ENCODE measurements at regions of chr20 and their contacts with region 1.

Region 1: DNA sequence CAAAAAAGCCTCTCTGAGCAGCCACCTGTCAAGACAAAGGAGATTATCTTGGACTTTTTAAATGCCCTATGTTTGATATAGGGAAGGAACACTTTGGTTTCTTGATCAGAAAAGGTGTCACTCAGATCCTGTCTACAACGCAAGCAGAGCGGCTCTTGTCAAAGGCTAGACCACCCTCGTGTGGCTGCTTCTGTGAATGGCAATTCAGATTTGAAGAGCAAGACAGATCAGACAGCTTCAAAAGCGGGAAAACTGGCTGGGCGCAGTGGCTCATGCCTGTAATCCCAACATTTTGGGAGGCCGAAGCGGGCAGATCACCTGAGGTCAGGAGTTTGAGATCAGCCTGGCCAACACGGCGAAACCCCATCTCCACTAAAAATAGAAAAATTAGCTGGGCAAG is 10.1 kb upstream of the NXT1 start:
- DNase-seq: peak; percentile 53
- H3K4me3 ChIP-seq: no peak overlapping the region
- CTCF ChIP-seq: peak; percentile 67

Region 2: GRCh38 chr20:22691369-22692118 is 649.0 kb before region 1 on chr20:
- in situ Hi-C with region 1: loop called (anchors 5 kb)
- DNase-seq: peak; percentile 41
- H3K4me3 ChIP-seq: no peak overlapping the region
- CTCF ChIP-seq: peak; percentile 92

Region 3: DNA sequence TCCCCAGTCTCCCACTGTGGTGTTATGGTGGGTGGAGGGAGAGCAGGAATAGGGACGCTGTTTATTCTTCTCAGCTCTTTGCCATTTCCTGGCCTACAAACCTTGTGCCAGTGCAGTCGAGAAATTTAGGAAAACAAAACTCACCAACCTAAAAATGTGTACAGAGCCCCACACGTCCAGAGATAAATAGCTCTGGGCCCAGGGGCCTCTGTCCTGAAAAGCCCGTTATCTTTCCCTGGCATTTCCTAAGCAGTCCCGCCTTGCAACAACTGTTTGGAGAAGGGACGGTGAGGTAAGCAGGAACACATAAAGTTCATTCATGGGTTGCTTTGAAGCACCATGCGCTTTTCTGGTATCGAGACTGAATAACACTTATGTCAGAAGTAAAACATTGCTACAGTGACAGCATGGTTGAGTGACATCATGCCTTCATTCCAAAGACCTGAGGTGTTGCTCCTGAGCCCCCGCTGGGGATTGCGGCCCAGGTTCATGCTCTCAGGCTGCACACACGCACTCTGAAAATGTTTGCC is 70.1 kb before region 1 on chr20:
- in situ Hi-C with region 1: no loop called
- DNase-seq: no peak
- H3K4me3 ChIP-seq: no peak overlapping the region
- CTCF ChIP-seq: no peak

Region 4: DNA sequence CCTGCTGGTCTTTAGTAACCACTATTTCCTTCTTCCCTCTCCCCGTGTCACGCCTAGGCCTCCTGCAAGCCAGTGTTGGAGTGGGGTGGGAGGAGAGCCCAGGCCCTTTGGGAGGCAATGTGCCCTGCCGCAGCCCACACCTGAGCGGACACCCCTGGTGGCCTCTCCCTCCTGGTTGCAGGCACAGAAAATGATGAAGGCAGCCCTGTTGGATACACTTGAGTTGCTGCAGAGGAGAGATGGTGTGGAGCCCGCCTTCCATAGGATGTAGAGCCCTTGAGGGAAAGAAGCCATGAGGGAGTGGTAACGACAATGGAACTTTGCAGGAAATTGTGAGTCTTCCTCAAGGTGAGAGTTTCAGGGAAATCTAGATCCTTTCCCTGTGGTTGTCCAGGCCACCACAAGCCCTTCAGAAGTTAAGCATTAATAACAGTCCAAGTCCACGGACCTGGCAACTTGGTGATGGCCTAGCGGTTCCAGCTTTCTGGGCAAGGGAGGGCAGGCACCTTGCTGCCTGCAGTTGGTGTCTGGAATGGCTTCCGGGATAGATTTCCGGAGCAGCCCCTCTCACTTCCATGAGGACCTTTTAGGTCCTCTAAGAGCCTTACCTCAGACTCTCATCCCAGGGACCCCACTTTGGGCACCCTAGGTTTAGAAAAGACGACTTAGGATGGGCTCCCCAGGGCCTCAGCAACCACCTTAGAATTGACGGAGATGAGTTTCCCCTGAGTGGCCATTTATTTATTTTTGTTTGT is 57.3 kb before region 1 on chr20:
- in situ Hi-C with region 1: no loop called
- DNase-seq: no peak
- H3K4me3 ChIP-seq: no peak overlapping the region
- CTCF ChIP-seq: no peak

Measured in astrocyte of the cerebellum (primary cell).